Aorta (tissue), 5 donors: ENCODE measurements at regions of chr6 and their contacts with region 1.

Region 1: GRCh38 chr6:14144678-14145113 is 27.1 kb downstream of the CD83 start:
- DNase-seq: peak; percentile 68 to 84
- ATAC-seq: peak; percentile 74
- H3K4me3 ChIP-seq: no peak overlapping the region
- H3K27ac ChIP-seq: no peak overlapping the region
- H3K4me1 ChIP-seq: no peaks in the 10 kb centered on the region
- H3K27me3 ChIP-seq: no peaks in the 10 kb centered on the region

Region 2: DNA sequence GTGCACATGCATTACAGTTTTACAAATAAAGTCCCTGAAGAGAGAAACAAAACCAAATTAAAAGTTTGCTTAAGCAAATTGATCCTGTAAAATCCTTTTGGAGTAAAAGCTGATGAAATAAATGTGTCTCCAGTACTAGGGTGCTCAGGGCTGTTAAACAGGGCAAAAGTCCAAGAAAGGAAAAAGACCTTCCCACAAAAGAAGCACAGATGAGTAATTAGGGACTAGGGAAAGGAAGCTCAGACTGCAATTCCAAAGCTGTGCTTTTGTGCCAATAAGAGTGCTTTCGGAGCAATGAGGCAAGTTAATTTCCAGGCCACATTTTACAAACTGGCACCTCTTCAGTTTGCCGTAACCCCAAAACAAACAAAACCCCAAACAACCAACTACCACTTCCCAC is 230.3 kb before region 1 on chr6:
- intact Hi-C with region 1: loop called (anchors 2 to 5 kb)
- DNase-seq: no peak
- ATAC-seq: no peak
- H3K4me3 ChIP-seq: no peak overlapping the region
- H3K27ac ChIP-seq: no peak overlapping the region
- H3K4me1 ChIP-seq: no peaks in the 10 kb centered on the region
- H3K27me3 ChIP-seq: no peaks in the 10 kb centered on the region